ENCODE measurements at regions of chr14 and their contacts with region 1.

Region 1: DNA sequence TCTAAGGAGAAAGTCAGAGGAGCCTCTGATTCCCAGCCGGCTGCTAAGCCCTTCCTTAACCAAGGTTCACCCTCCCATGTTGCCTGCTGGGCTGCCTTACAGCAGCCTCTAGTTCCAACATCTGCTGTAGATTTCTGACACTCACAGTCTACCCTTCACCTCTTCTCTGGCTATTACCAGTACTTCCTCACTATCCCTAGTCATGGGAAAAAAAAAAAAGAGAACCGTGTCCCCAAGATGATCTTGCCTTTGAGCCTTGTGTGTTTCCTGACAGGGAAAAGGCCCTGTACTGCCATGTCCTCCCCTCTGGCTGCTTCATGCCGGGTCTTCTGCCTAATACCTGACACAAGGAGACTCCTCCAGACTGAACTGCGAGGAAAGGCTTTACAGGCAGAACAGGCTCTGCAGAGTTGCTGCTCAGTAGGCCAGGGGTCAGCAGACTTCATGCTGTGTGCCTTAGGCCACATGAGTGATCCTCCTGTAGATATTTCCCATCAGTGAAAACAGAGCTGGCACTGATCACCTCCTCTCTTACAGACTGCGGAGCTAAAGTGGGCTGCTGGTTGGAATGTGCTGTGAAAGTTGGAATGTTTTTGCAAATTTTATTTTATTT is 46.8 kb downstream of the PRKCH start:
- DNase-seq: no peak
- ATAC-seq: no peak
- H3K4me3 ChIP-seq: no peak overlapping the region
- H3K4me3 Mint-ChIP-seq: no peak overlapping the region
- H3K27ac ChIP-seq: peak overlapping the region; percentile 58
- H3K27ac Mint-ChIP-seq: no peak overlapping the region
- H3K4me1 ChIP-seq: peaks cover 64% of the 10 kb centered on the region
- H3K4me1 Mint-ChIP-seq: peaks cover 22 to 30% of the 10 kb centered on the region in 2 donors
- H3K27me3 ChIP-seq: no peaks in the 10 kb centered on the region
- H3K27me3 Mint-ChIP-seq: no peaks in the 10 kb centered on the region
- CTCF ChIP-seq: no peak

Region 2: DNA sequence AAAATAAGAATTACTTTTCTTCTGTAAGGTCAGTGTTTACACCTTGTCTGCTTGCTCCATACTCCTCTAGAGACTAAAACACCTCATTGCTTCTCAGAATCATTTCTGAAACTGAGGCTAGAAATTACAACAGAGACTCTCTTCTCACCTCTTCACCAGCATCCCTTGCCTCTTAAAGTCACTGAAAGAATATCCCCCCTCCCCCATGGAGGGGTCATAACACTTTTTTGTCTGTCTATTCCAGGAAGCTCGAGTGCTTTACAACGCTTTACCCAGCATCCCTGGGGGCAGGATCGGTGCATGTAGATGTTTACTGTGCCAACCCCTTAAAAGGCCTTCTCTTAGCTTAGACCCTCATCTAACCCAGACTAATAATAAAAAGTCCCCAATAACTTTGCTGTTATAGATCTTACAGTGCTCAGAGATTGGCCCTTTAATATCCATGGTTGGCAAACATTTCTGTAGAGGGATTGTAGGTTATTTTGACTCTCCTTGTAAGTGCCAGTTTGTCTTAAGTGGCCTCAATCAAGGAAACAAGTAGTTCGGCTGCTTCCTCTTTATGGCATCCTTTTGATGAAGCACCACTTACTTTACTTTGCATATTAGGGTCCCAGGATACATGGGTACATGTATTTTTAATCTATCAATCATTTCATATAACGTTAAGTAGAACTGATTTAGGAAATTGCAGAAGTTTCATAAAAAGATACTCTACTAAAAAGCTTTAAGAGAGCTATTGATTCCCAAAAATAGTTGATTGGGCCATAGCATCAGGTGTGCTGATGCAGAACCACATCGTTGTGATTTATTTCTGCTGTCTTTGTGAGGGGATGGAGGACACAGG is 17.6 kb before region 1 on chr14:
- intact Hi-C with region 1: loop called (anchors 2 kb)
- DNase-seq: peak in 1 of 2 donors; percentile 57
- ATAC-seq: peak; percentile 39 to 49 (median 43)
- H3K4me3 ChIP-seq: no peak overlapping the region
- H3K4me3 Mint-ChIP-seq: peak overlapping the region; percentile 78
- H3K27ac ChIP-seq: peak overlapping the region; percentile 90
- H3K27ac Mint-ChIP-seq: peak overlapping the region in 1 of 2 donors; percentile 99
- H3K4me1 ChIP-seq: peaks cover 68% of the 10 kb centered on the region
- H3K4me1 Mint-ChIP-seq: peaks cover 100% of the 10 kb centered on the region in 2 donors
- H3K27me3 ChIP-seq: no peaks in the 10 kb centered on the region
- H3K27me3 Mint-ChIP-seq: no peaks in the 10 kb centered on the region
- CTCF ChIP-seq: no peak

Region 3: DNA sequence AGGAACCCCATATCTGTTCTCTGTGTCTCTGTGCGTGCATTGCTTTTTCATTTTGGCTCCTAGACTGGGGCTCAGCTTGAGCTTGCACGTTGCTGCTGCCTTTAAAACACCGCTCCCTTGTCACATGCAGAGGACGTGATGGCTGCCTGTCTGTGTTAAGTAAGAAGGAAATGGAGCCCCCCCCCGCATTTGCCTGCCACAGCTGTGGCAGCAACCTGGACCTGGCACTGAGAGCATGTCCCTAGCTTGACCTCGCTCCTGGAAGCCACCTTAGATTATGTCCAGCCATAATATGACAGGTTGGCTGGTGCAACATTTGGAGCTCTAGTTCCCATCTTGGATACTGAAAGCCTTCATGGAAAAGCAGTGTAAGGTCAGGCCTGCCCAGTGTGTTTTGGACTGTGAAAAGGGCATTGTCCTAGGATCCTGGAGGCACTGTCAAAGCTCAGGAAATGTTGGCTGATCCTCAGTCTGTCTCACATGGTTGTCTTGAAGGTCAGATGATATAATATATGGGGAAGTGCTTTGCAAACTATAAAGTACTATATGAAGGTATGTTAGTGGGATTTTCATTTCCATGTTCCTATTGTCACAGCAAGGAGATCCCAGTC is 27.0 kb after region 1 on chr14:
- intact Hi-C with region 1: no loop called
- DNase-seq: peak in 1 of 2 donors; percentile 54
- ATAC-seq: peak in 2 of 3 donors; percentile 25 to 40
- H3K4me3 ChIP-seq: no peak overlapping the region
- H3K4me3 Mint-ChIP-seq: peak overlapping the region; percentile 58
- H3K27ac ChIP-seq: peak overlapping the region; percentile 20
- H3K27ac Mint-ChIP-seq: no peak overlapping the region
- H3K4me1 ChIP-seq: peaks cover 37% of the 10 kb centered on the region
- H3K4me1 Mint-ChIP-seq: peaks cover 43 to 78% of the 10 kb centered on the region in 2 donors
- H3K27me3 ChIP-seq: no peaks in the 10 kb centered on the region
- H3K27me3 Mint-ChIP-seq: no peaks in the 10 kb centered on the region
- CTCF ChIP-seq: no peak

Region 4: GRCh38 chr14:61620130-61620946 is 252.1 kb after region 1 on chr14:
- intact Hi-C with region 1: no loop called
- DNase-seq: no peak
- ATAC-seq: no peak
- H3K4me3 ChIP-seq: no peak overlapping the region
- H3K4me3 Mint-ChIP-seq: no peak overlapping the region
- H3K27ac ChIP-seq: no peak overlapping the region
- H3K27ac Mint-ChIP-seq: no peak overlapping the region
- H3K4me1 ChIP-seq: no peaks in the 10 kb centered on the region
- H3K4me1 Mint-ChIP-seq: no peaks in the 10 kb centered on the region
- H3K27me3 ChIP-seq: no peaks in the 10 kb centered on the region
- H3K27me3 Mint-ChIP-seq: peaks cover 0 to 4% of the 10 kb centered on the region in 2 donors
- CTCF ChIP-seq: no peak

Measured in natural killer cell (primary cell).